Activated CD4-positive, alpha-beta memory T cell treated with anti-CD3 and anti-CD28 coated beads for 36 hours (primary cell): ENCODE measurements at regions of chr5 and their contacts with region 1.

Region 1: GRCh38 chr5:138752951-138753793 is at the start of gene CTNNA1:
- DNase-seq: peak; percentile 70
- H3K4me3 Mint-ChIP-seq: peak within 1 kb of the TSS; percentile 70
- H3K27ac Mint-ChIP-seq: no peak within 1 kb of the TSS
- H3K4me1 Mint-ChIP-seq: peaks cover 34% of the 10 kb centered on the region
- H3K27me3 Mint-ChIP-seq: peaks cover 21% of the 10 kb centered on the region
- total RNA-seq, gene CTNNA1: 82.8 to 89.5 TPM

Region 2: GRCh38 chr5:138654281-138654867 is 98.8 kb before region 1 on chr5:
- CTCF ChIA-PET with region 1: no interaction called
- POLR2A ChIA-PET with region 1: no interaction called
- intact Hi-C with region 1: loop called (anchors 5 kb)
- DNase-seq: peak; percentile 83
- H3K4me3 Mint-ChIP-seq: peak overlapping the region; percentile 16
- H3K27ac Mint-ChIP-seq: peak overlapping the region; percentile 26
- H3K4me1 Mint-ChIP-seq: peaks cover 23% of the 10 kb centered on the region
- H3K27me3 Mint-ChIP-seq: peaks cover 74% of the 10 kb centered on the region

Region 3: GRCh38 chr5:138737494-138738265 is 15.5 kb before region 1 on chr5:
- CTCF ChIA-PET with region 1: no interaction called
- POLR2A ChIA-PET with region 1: interaction called, 4 read pairs
- intact Hi-C with region 1: loop called (anchors 1 kb)
- DNase-seq: no peak
- H3K4me3 Mint-ChIP-seq: no peak overlapping the region
- H3K27ac Mint-ChIP-seq: no peak overlapping the region
- H3K4me1 Mint-ChIP-seq: peaks cover 21% of the 10 kb centered on the region
- H3K27me3 Mint-ChIP-seq: peaks cover 2% of the 10 kb centered on the region

Region 4: DNA sequence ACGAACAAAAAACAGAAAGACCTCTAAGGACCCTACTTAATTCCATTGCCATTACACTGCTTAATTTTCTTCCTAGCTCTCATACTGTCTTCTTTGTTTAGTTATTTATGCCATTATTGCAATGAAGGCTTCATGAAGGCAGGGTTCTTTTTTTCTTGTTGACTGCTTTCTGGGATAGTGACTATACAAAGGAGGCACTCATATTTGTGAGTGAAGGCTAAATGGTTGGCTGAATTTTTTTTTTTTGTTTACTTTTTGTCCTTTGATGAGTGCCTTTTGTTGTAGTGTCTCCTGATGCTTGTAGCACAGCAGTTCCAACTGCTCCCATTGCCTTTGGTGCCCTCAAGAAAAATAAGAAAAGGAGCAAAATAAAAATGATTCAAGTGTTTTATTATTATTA is 17.8 kb after region 1 on chr5:
- CTCF ChIA-PET with region 1: no interaction called
- POLR2A ChIA-PET with region 1: no interaction called
- intact Hi-C with region 1: no loop called
- DNase-seq: no peak
- H3K4me3 Mint-ChIP-seq: no peak overlapping the region
- H3K27ac Mint-ChIP-seq: no peak overlapping the region
- H3K4me1 Mint-ChIP-seq: no peaks in the 10 kb centered on the region
- H3K27me3 Mint-ChIP-seq: no peaks in the 10 kb centered on the region

Region 5: DNA sequence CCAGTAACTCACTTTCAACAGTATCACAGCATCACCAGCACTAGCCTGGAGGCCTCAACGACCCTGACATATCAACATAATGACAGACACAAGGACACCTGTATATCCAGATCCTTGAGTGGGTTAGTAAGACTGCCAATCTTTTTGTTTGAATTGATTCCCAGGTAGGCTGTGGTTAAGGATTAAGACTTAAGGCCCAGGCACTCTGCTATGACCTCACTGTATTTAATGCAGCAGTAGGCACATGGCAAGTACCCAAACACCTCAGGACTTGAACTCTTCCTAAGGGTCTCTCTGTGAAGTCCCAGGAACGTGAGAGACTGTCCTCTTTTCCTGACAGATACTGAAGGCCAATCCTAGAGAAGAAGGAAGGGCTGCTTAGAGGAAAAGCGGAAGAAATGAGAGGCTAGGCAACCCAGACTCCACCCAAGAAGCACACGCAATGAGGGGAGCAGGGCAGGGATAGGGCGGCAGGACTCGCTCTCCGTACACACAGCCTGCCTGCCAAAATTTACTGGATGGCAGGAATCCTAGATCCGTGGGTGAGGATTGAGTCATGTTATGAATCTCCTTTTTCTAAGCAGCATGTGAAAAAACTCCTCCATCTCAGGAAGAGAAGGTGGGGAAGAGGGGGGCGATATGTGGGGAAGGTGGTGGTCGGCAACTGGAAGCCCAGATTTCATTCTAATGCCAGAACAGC is 351.6 kb after region 1 on chr5:
- CTCF ChIA-PET with region 1: no interaction called
- POLR2A ChIA-PET with region 1: no interaction called
- intact Hi-C with region 1: no loop called
- DNase-seq: no peak
- H3K4me3 Mint-ChIP-seq: no peak overlapping the region
- H3K27ac Mint-ChIP-seq: no peak overlapping the region
- H3K4me1 Mint-ChIP-seq: no peaks in the 10 kb centered on the region
- H3K27me3 Mint-ChIP-seq: no peaks in the 10 kb centered on the region

Region 6: GRCh38 chr5:139341650-139342422 is 588.7 kb after region 1 on chr5 and contains the start of gene PAIP2:
- CTCF ChIA-PET with region 1: no interaction called
- POLR2A ChIA-PET with region 1: no interaction called
- intact Hi-C with region 1: loop called (anchors 10 kb)
- DNase-seq: peak; percentile 98
- H3K4me3 Mint-ChIP-seq: peak within 1 kb of the TSS; percentile 97
- H3K27ac Mint-ChIP-seq: peak within 1 kb of the TSS; percentile 95
- H3K4me1 Mint-ChIP-seq: peaks cover 46% of the 10 kb centered on the region
- H3K27me3 Mint-ChIP-seq: no peaks in the 10 kb centered on the region
- total RNA-seq, gene PAIP2: 104 to 110 TPM